A673 (cell line): ENCODE measurements at regions of chr9 and their contacts with region 1.

Region 1: GRCh38 chr9:126457890-126458289 is 131.3 kb downstream of the MVB12B start:
- DNase-seq: no peak
- H3K4me3 ChIP-seq: no peak overlapping the region
- H3K27ac ChIP-seq: no peak overlapping the region
- H3K4me1 ChIP-seq: no peaks in the 10 kb centered on the region
- H3K27me3 ChIP-seq: no peaks in the 10 kb centered on the region
- CTCF ChIP-seq: no peak

Region 2: GRCh38 chr9:125805057-125805456 is 652.8 kb before region 1 on chr9:
- CTCF ChIA-PET with region 1: no interaction called
- POLR2A ChIA-PET with region 1: interaction called, 12 read pairs
- intact Hi-C with region 1: no loop called
- DNase-seq: no peak
- H3K4me3 ChIP-seq: no peak overlapping the region
- H3K27ac ChIP-seq: no peak overlapping the region
- H3K4me1 ChIP-seq: no peaks in the 10 kb centered on the region
- H3K27me3 ChIP-seq: peaks cover 37% of the 10 kb centered on the region
- CTCF ChIP-seq: no peak

Region 3: DNA sequence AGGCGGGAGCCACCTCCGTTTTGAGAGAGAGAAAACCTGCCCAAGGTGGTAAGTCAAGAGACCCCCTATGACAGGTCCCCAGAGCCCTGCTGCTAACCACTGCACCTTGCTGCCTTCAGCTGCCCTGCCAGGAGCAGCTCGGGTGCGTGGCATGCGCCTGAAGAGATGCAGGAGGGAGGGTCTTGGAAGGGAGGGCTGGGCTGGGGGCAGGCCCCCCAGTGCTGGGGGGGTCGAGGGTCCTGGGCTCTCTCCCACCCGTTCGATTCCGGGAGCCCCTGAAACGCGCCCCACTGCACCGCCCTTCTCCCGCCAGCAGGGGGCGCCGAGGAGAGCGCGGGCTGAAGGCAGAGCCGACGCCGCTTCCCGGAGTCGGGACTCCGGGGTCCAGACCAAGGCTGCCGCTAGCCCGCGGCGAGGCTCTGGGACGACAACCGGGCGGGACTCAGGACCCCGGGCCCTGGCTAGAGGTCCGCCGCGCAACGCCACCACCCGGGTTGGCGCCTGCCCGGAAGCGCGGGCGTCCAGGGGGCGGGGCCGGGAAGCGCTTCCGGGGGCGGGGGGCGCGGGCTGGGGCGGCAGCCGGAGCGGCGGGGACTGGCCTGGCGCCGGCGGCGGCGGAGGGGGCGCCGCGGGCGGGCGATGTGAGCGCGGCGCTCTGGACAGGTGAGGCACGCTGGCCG is 402.3 kb after region 1 on chr9 and contains the start of gene ZBTB34:
- CTCF ChIA-PET with region 1: no interaction called
- POLR2A ChIA-PET with region 1: no interaction called
- intact Hi-C with region 1: no loop called
- DNase-seq: peak; percentile 74
- H3K4me3 ChIP-seq: peak within 1 kb of the TSS; percentile 96
- H3K27ac ChIP-seq: peak within 1 kb of the TSS; percentile 93
- H3K4me1 ChIP-seq: peaks cover 8% of the 10 kb centered on the region
- H3K27me3 ChIP-seq: no peaks in the 10 kb centered on the region
- CTCF ChIP-seq: peak; percentile 99
- total RNA-seq, gene ZBTB34: 10.1 and 10.9 TPM in 2 replicates